ENCODE measurements at regions of chr6 and their contacts with region 1.

Region 1: GRCh38 chr6:33248925-33249731 is 22.5 kb downstream of the VPS52 start:
- DNase-seq: peak; percentile 98
- ATAC-seq: peak; percentile 97

Region 2: GRCh38 chr6:32885698-32886286 is 363.3 kb before region 1 on chr6:
- intact Hi-C with region 1: loop called (anchors 5 kb)
- DNase-seq: no peak
- ATAC-seq: no peak

Region 3: DNA sequence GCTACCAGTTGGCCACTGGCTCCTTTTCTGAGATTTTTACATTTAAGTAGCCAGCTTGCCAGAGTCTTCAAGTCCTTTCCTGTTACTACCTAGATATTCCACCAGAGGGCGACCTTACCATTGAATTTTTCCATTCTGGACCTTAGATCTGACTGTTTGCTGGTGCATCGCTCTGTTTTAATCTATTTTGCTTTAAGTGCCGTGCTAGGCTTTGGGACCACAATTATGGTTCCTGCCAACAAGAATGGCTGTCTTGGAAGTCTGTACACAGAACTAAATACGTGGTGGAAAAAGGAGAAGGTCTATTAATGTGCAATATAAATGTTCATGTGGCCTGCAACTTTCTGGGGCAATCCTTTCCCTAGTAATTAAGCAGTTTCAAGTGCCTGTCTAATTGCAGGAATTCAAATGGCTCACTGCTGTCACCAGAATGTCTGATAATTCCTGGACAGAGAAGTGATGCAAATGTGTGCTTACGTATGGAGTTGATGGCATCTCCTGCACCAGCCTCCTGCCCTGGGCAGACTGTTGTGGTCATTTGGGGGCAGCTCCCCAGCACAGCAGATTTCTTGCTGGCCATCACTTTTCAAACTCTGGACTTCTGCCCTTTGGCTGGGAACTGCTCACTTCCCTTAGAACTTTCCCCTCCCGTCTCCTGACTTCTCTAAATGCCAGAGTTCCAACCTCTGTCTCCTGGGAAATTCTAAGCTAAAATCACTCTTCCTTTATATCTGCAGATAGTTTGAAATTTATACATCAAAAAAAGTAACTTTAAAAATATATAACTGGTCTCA is 234.1 kb before region 1 on chr6:
- intact Hi-C with region 1: loop called (anchors 1 kb)
- DNase-seq: no peak
- ATAC-seq: peak; percentile 58

Region 4: DNA sequence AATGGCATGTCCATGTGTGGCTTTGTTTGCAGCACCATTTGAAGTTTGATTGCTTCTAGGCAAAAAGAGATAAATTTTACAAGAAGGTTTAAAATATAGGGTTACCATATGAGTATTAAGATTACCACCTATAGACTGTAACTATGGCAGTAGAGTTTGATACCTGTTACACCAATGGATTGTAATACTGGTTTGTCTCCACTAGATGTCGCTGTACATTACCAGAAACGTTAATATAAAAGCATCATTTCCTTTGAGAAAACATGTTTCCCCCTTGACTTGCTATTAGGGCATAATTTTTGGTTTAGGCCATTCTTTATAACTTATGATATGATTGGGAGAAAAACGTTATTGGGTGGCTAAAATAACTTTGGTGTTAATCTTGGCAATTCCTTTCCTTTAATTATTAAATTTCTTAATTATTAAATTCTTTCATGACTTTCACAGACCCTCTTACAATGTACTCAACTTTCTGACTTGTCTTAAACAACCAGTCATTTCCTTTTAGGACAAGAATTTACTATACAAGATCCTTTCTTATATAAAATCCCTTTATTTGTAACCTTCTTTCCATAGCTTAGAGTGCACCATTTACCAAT is 130.5 kb before region 1 on chr6:
- intact Hi-C with region 1: loop called (anchors 2 kb)
- DNase-seq: no peak
- ATAC-seq: no peak

Region 5: GRCh38 chr6:33161354-33162331 is 87.5 kb before region 1 on chr6:
- intact Hi-C with region 1: loop called (anchors 1 kb)
- DNase-seq: peak; percentile 92
- ATAC-seq: peak; percentile 91

Region 6: GRCh38 chr6:33200219-33201146 is 48.6 kb before region 1 on chr6 and contains the starts of genes RXRB and SLC39A7:
- intact Hi-C with region 1: loop called (anchors 2 kb)
- DNase-seq: peak; percentile 100
- ATAC-seq: peak; percentile 89
- total RNA-seq, gene RXRB: 39.3 TPM
- total RNA-seq, gene SLC39A7: 55.4 TPM

Region 7: GRCh38 chr6:33208091-33208967 is 40.8 kb before region 1 on chr6 and contains the start of gene RING1:
- intact Hi-C with region 1: loop called (anchors 2 kb)
- DNase-seq: peak; percentile 97
- ATAC-seq: peak; percentile 84
- total RNA-seq, gene RING1: 27.7 TPM